Left ventricle myocardium inferior (tissue), 1 donor: ENCODE measurements at regions of chr10 and their contacts with region 1.

Region 1: GRCh38 chr10:61896854-61897661 is 4.4 kb upstream of the ARID5B start:
- DNase-seq: peak; percentile 38
- H3K4me3 ChIP-seq: peak overlapping the region; percentile 65
- H3K27ac ChIP-seq: peak overlapping the region; percentile 41
- H3K4me1 ChIP-seq: peaks cover 45% of the 10 kb centered on the region
- H3K27me3 ChIP-seq: no peaks in the 10 kb centered on the region
- CTCF ChIP-seq: peak; percentile 77

Region 2: GRCh38 chr10:62244780-62245467 is 347.9 kb after region 1 on chr10:
- intact Hi-C with region 1: loop called (anchors 5 kb)
- DNase-seq: no peak
- H3K4me3 ChIP-seq: no peak overlapping the region
- H3K27ac ChIP-seq: no peak overlapping the region
- H3K4me1 ChIP-seq: peaks cover 10% of the 10 kb centered on the region
- H3K27me3 ChIP-seq: no peaks in the 10 kb centered on the region
- CTCF ChIP-seq: peak; percentile 92